AG04450 (cell line): ENCODE measurements at regions of chr2 and their contacts with region 1.

Region 1: GRCh38 chr2:238370823-238371372 is 50.6 kb downstream of the TRAF3IP1 start:
- DNase-seq: peak; percentile 32
- H3K4me3 ChIP-seq: no peak overlapping the region
- H3K27ac ChIP-seq: no peak overlapping the region
- H3K27me3 ChIP-seq: no peaks in the 10 kb centered on the region
- CTCF ChIP-seq: peak; percentile 96

Region 2: GRCh38 chr2:238077292-238077691 is 293.6 kb before region 1 on chr2:
- CTCF ChIA-PET with region 1: no interaction called
- POLR2A ChIA-PET with region 1: no interaction called
- DNase-seq: no peak
- H3K4me3 ChIP-seq: no peak overlapping the region
- H3K27ac ChIP-seq: no peak overlapping the region
- H3K27me3 ChIP-seq: no peaks in the 10 kb centered on the region
- CTCF ChIP-seq: no peak

Region 3: DNA sequence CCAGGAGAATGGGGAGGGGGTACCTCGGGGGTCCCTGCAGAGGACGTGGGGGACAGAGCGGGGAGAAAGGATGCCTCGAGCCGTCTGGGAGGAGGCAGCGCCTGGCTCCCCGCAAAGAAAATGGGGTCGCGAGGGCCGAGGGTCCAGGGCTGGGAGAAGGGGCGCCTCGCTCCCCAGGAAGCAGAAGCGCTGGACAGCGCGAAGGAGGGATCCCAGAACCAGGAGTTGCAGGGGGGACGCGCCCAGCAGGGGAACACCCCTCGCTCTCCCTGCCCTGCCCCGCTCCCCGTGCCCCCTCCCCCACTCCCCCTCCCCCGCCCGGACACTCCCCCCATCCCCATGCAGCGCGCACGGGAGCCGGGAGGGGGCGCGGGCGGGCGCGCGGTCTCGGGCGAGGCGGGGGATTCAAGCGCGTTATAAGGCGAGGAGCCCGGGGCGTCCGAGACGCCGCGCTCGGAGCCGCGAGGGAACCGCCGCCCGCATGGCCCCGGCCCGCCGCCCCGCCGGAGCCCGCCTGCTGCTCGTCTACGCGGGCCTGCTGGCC is 212.3 kb before region 1 on chr2 and contains the start of gene ERFE:
- CTCF ChIA-PET with region 1: no interaction called
- POLR2A ChIA-PET with region 1: no interaction called
- DNase-seq: no peak
- H3K4me3 ChIP-seq: peak within 1 kb of the TSS; percentile 47
- H3K27ac ChIP-seq: no peak within 1 kb of the TSS
- H3K27me3 ChIP-seq: no peaks in the 10 kb centered on the region
- CTCF ChIP-seq: peak; percentile 44
- polyA plus RNA-seq, gene ERFE: 2.4 and 2.9 TPM in 2 replicates

Region 4: GRCh38 chr2:238358769-238359168 is 12.1 kb before region 1 on chr2:
- CTCF ChIA-PET with region 1: interaction called, 46 read pairs
- POLR2A ChIA-PET with region 1: interaction called, 3 read pairs
- DNase-seq: no peak
- H3K4me3 ChIP-seq: no peak overlapping the region
- H3K27ac ChIP-seq: no peak overlapping the region
- H3K27me3 ChIP-seq: no peaks in the 10 kb centered on the region
- CTCF ChIP-seq: no peak

Region 5: GRCh38 chr2:238387332-238387731 is 16.4 kb after region 1 on chr2:
- CTCF ChIA-PET with region 1: interaction called, 18 read pairs
- POLR2A ChIA-PET with region 1: no interaction called
- DNase-seq: no peak
- H3K4me3 ChIP-seq: no peak overlapping the region
- H3K27ac ChIP-seq: no peak overlapping the region
- H3K27me3 ChIP-seq: no peaks in the 10 kb centered on the region
- CTCF ChIP-seq: no peak

Region 6: DNA sequence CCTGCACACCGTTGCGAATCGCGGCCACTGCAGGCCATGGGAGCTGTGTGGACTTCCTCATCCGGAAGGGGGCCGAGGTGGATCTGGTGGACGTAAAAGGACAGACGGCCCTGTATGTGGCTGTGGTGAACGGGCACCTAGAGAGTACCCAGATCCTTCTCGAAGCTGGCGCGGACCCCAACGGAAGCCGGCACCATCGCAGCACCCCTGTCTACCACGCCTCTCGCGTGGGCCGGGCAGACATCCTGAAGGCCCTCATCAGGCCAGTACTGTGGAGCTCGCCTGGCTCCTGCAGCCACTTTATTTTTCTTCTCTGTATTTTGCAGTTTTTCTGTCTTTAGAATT is 64.8 kb after region 1 on chr2:
- CTCF ChIA-PET with region 1: interaction called, 12 read pairs
- POLR2A ChIA-PET with region 1: no interaction called
- DNase-seq: no peak
- H3K4me3 ChIP-seq: no peak overlapping the region
- H3K27ac ChIP-seq: peak overlapping the region; percentile 98
- H3K27me3 ChIP-seq: no peaks in the 10 kb centered on the region
- CTCF ChIP-seq: no peak

Region 7: GRCh38 chr2:238462782-238463396 is 92.0 kb after region 1 on chr2:
- CTCF ChIA-PET with region 1: interaction called, 26 read pairs
- POLR2A ChIA-PET with region 1: no interaction called
- DNase-seq: peak; percentile 11
- H3K4me3 ChIP-seq: no peak overlapping the region
- H3K27ac ChIP-seq: no peak overlapping the region
- H3K27me3 ChIP-seq: no peaks in the 10 kb centered on the region
- CTCF ChIP-seq: peak; percentile 74

Region 8: DNA sequence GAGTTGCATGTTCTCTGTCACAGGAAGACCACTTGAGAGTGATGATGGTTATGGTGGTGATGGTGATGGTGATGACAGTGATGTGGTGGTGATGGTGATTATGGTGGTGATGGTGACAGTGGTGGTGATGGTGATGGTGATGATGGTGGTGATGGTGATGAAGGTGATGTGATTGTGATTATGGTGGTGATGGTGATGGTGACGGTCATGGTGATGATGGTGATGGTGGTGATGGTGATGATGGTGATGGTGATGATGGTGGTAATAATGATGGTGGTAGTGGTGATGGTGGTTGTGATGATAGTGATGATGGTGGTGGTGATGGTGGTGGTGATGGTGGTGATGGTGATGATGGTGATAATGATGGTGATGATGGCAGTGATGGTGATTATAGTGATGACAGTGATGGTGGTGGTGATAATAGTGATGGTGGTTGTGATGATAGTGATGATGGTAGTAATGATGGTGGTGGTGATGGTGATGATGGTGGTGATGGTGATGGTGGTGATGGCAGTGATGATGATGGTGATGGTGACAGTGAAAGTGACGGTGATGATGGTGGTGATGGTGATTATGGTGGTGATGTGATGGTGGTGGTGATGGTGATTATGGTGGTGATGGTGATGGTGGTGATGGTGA is 149.6 kb after region 1 on chr2:
- CTCF ChIA-PET with region 1: no interaction called
- POLR2A ChIA-PET with region 1: no interaction called
- DNase-seq: no peak
- H3K4me3 ChIP-seq: no peak overlapping the region
- H3K27ac ChIP-seq: no peak overlapping the region
- H3K27me3 ChIP-seq: peaks cover 22% of the 10 kb centered on the region
- CTCF ChIP-seq: no peak

Region 9: GRCh38 chr2:239002954-239003588 is 632.2 kb after region 1 on chr2:
- CTCF ChIA-PET with region 1: interaction called, 12 read pairs
- POLR2A ChIA-PET with region 1: no interaction called
- DNase-seq: peak; percentile 29
- H3K4me3 ChIP-seq: peak overlapping the region; percentile 25
- H3K27ac ChIP-seq: peak overlapping the region; percentile 1
- H3K27me3 ChIP-seq: peaks cover 29% of the 10 kb centered on the region
- CTCF ChIP-seq: peak; percentile 64